CD4-positive, alpha-beta T cell (primary cell): ENCODE measurements at regions of chr19 and their contacts with region 1.

Region 1: DNA sequence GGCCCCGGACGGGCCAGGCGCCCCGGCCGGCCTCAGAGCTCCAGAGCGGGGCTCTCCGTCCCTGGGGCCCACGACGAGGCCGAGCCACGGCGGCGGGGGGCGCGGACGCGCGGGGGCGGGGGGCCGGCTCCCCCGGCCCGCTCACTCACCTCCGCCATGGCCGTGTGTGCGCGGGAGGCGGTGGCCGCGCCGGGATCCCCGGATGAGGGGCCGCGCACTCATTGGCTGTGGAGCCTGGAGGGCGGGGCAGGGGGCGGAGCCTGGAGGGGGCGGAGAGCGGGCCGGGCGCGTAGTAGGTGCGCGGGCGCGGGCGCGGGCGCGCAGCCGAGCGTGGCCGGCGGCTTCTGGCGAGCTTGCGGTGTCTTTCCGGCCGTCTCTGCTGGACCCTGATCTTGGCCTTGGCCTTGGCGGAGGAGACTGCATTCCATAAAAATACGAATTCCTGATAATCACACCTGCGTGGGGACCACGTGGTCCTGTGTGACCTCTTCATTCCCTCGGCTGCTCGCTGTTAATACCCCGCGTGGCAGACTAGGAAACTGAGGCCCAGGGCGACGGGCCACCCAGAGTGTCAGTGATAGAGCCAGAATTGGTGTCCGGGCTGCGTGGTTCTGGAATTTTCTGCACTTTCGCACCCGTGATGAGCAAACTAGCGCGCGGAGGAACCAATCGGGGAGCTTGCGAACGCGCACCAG is at the start of gene MIER2:
- DNase-seq: peak; percentile 74 to 96 (median 88)
- ATAC-seq: peak; percentile 92
- H3K4me3 ChIP-seq: peak within 1 kb of the TSS; percentile 71
- H3K4me3 Mint-ChIP-seq: peak within 1 kb of the TSS; percentile 91
- H3K27ac ChIP-seq: no peak within 1 kb of the TSS
- H3K27ac Mint-ChIP-seq: peak within 1 kb of the TSS; percentile 63
- H3K4me1 ChIP-seq: peaks cover 46% of the 10 kb centered on the region
- H3K4me1 Mint-ChIP-seq: peaks cover 51% of the 10 kb centered on the region
- H3K27me3 ChIP-seq: no peaks in the 10 kb centered on the region
- H3K27me3 Mint-ChIP-seq: no peaks in the 10 kb centered on the region
- CTCF ChIP-seq: no peak
- total RNA-seq, gene MIER2: 9.5 to 11.5 TPM

Region 2: DNA sequence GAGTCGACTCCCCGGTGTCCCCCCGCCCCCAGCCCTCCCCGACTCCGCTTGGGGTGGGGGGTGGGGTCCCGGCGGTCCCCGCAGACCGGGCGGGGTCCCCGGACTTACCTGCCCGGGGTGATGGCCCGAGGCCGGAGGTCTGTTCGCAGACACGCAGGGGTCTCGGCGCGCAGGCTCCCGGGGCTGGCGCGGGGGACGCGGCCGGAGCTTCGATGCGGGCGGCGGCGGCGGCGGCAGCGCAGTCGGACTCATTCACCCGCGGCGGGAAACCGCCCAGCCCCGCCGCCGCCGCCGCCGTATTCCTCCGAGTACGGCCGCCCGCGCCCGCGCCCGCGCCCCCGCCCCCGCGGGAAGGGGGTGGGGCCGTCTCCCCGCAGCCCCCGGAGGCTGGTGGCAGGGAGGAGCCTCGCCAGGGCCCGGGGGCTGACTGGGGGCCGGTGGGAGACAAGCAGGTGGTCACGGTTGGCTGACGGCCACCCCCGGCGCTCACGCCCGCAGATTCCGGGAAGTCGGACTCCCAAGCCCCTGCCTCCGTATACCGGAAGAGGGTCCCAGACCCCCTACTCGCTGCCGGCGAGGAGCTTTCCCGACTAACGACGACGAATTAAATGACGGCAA is 64.2 kb after region 1 on chr19 and contains the start of gene C2CD4C:
- CTCF ChIA-PET with region 1: no interaction called
- POLR2A ChIA-PET with region 1: no interaction called
- intact Hi-C with region 1: no loop called
- DNase-seq: peak in 7 of 14 experiments; percentile 7 to 43 (median 17)
- ATAC-seq: peak; percentile 51
- H3K4me3 ChIP-seq: peak within 1 kb of the TSS; percentile 35
- H3K4me3 Mint-ChIP-seq: peak within 1 kb of the TSS; percentile 89
- H3K27ac ChIP-seq: no peak within 1 kb of the TSS
- H3K27ac Mint-ChIP-seq: no peak within 1 kb of the TSS
- H3K4me1 ChIP-seq: peaks cover 23% of the 10 kb centered on the region
- H3K4me1 Mint-ChIP-seq: peaks cover 8% of the 10 kb centered on the region
- H3K27me3 ChIP-seq: peaks cover 43 to 47% of the 10 kb centered on the region in 2 experiments
- H3K27me3 Mint-ChIP-seq: peaks cover 22% of the 10 kb centered on the region
- CTCF ChIP-seq: no peak
- total RNA-seq, gene C2CD4C: not detected

Region 3: GRCh38 chr19:488505-489417 is 144.0 kb after region 1 on chr19:
- CTCF ChIA-PET with region 1: no interaction called
- POLR2A ChIA-PET with region 1: no interaction called
- intact Hi-C with region 1: loop called in 1 of 2 experiments (anchors 5 kb)
- DNase-seq: peak; percentile 85 to 97 (median 92)
- ATAC-seq: peak; percentile 96
- H3K4me3 ChIP-seq: peak overlapping the region; percentile 65
- H3K4me3 Mint-ChIP-seq: peak overlapping the region; percentile 69
- H3K27ac ChIP-seq: peak overlapping the region; percentile 74 to 79
- H3K27ac Mint-ChIP-seq: peak overlapping the region; percentile 42
- H3K4me1 ChIP-seq: peaks cover 15% of the 10 kb centered on the region
- H3K4me1 Mint-ChIP-seq: no peaks in the 10 kb centered on the region
- H3K27me3 ChIP-seq: peaks cover 8 to 11% of the 10 kb centered on the region in 2 experiments
- H3K27me3 Mint-ChIP-seq: peaks cover 16% of the 10 kb centered on the region
- CTCF ChIP-seq: no peak